MCF 10A (cell line): ENCODE measurements at regions of chr12 and their contacts with region 1.

Region 1: DNA sequence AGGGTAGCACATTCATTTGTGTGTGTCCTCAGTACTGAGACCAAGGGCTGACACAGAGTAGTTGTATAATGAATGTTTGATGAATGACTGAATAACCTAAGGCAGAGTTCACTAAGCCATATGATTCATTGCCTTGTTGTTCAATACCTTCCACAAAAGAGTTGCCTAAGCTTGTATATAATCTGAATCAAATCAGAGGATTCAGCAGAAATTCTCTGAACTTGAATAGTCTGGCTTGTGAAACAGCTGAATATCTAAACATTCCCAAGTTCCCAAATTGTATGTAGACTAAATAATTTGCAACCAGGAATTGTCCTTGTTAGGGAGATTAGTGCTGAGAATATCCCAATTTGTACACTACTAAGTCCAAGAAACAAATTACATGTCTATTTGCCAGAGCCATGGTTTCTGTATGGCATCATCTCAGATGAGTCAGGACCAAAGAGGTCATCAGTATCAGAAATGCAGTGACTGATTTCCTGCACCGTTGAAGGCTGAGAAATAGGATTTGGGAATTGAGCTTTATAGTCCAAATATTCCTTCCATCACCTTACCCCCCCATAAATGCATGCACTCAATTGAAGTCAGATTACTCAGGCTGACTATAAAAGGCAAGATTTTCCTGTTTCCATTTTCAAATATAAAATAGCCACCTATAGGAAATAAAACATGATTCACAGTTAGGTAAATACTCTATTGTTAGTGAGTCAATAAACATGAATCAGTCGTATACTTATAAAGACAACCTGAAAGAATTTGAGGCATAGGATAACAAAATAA is 168.7 kb downstream of the PHLDA1 start:
- DNase-seq: peak; percentile 85
- H3K4me3 Mint-ChIP-seq: no peak overlapping the region
- H3K27ac Mint-ChIP-seq: peak overlapping the region; percentile 83
- H3K4me1 Mint-ChIP-seq: peaks cover 19% of the 10 kb centered on the region
- H3K27me3 Mint-ChIP-seq: no peaks in the 10 kb centered on the region
- CTCF ChIP-seq: no peak

Region 2: DNA sequence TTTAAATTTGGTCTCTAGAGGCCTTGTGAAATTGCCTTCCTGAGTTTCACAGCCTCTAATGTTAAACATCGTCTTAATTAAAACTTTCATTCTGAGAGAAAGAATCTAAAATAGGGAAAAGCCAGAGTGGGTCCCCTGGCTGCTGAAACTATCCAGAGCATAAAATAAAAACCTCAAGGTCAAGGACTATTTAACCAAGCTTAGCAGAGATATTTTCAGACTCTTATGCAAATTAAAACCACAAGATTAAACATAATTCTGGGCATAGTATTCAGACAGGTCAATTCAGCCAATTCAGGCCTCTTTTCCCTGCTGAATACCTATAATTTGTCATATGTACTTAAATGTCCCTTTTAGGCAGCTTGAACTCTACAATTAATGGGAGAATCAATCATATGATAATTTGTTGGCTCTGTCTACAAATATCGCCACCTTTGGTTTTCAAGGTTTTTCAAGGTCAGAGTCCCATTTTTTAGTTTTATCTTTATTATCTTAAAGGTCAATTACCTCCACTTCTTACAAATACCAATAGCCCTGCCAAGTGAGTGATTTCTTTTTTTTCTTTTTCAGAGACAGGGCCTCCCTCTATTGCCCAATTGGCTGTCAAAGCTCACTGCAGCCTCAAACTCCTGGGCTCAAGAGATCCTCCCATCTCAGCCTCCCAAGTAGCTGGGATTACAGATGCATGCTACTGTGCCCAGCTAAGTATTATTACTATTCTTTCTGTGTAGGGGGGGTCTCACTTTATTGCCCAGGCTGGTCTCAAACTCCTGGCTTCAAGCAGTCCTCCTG is 88.4 kb before region 1 on chr12:
- CTCF ChIA-PET with region 1: no interaction called
- POLR2A ChIA-PET with region 1: no interaction called
- intact Hi-C with region 1: no loop called
- DNase-seq: no peak
- H3K4me3 Mint-ChIP-seq: no peak overlapping the region
- H3K27ac Mint-ChIP-seq: no peak overlapping the region
- H3K4me1 Mint-ChIP-seq: no peaks in the 10 kb centered on the region
- H3K27me3 Mint-ChIP-seq: no peaks in the 10 kb centered on the region
- CTCF ChIP-seq: no peak

Region 3: DNA sequence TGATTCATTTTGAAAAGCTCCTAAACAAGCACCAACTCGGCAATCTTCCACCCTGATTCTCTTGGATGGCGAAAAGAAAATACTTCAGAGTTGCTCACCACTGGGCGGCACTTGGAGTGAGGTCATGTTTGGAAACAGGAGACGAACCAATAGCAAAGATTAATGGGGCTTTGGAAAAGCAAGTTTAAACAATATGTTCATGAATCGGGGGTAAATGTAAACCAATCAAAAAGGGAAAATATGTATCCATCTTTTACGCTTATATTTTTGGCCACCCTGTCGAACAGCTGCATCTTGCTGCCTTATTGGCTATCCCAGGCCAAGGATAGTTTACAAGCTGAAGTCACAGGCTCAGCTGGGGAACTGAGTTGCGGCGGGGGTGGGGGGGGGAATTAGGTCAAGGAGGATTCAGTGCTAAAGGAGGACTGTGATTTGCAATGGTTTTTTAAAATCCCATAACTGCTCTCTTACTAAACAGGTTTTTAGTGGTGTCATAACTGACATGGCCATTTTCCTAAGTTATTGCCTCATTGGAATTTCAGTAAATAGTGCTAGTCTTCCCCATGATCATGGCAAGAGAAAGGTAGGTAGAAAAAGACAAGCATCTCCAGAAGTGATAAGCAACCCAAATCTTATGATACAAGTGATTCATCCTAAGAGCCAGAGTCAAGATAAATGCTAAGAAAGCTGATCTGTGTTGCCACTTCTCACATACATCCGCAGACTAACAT is 41.9 kb before region 1 on chr12:
- CTCF ChIA-PET with region 1: interaction called, 4 read pairs
- POLR2A ChIA-PET with region 1: interaction called, 4 read pairs
- intact Hi-C with region 1: loop called (anchors 5 kb)
- DNase-seq: peak; percentile 84
- H3K4me3 Mint-ChIP-seq: no peak overlapping the region
- H3K27ac Mint-ChIP-seq: no peak overlapping the region
- H3K4me1 Mint-ChIP-seq: peaks cover 17% of the 10 kb centered on the region
- H3K27me3 Mint-ChIP-seq: no peaks in the 10 kb centered on the region
- CTCF ChIP-seq: peak; percentile 21

Region 4: GRCh38 chr12:75954041-75954440 is 91.2 kb after region 1 on chr12:
- CTCF ChIA-PET with region 1: no interaction called
- POLR2A ChIA-PET with region 1: no interaction called
- intact Hi-C with region 1: loop called (anchors 5 kb)
- DNase-seq: peak; percentile 88
- H3K4me3 Mint-ChIP-seq: no peak overlapping the region
- H3K27ac Mint-ChIP-seq: peak overlapping the region; percentile 77
- H3K4me1 Mint-ChIP-seq: peaks cover 14% of the 10 kb centered on the region
- H3K27me3 Mint-ChIP-seq: no peaks in the 10 kb centered on the region
- CTCF ChIP-seq: no peak